ENCODE measurements at regions of chr7 and their contacts with region 1.

Region 1: GRCh38 chr7:47818796-47819606 is 129.3 kb downstream of the PKD1L1 start:
- DNase-seq: peak; percentile 66 to 82
- H3K4me3 ChIP-seq: no peak overlapping the region
- H3K4me3 Mint-ChIP-seq: no peak overlapping the region
- H3K27ac Mint-ChIP-seq: no peak overlapping the region
- H3K4me1 ChIP-seq: peaks cover 15% of the 10 kb centered on the region
- H3K4me1 Mint-ChIP-seq: peaks cover 26% of the 10 kb centered on the region
- H3K27me3 ChIP-seq: no peaks in the 10 kb centered on the region
- H3K27me3 Mint-ChIP-seq: no peaks in the 10 kb centered on the region
- CTCF ChIP-seq: peak; percentile 96 to 98

Region 2: GRCh38 chr7:47435889-47436312 is 383.1 kb before region 1 on chr7:
- CTCF ChIA-PET with region 1: interaction called, 7 read pairs
- POLR2A ChIA-PET with region 1: no interaction called
- intact Hi-C with region 1: loop called (anchors 2 kb)
- DNase-seq: peak in 1 of 2 experiments; percentile 71
- H3K4me3 ChIP-seq: no peak overlapping the region
- H3K4me3 Mint-ChIP-seq: no peak overlapping the region
- H3K27ac Mint-ChIP-seq: peak overlapping the region; percentile 48
- H3K4me1 ChIP-seq: 0 out of 2 replicates have a peak, but pooled peaks cover 4% of the 10 kb centered on the region
- H3K4me1 Mint-ChIP-seq: peaks cover 34% of the 10 kb centered on the region
- H3K27me3 ChIP-seq: no peaks in the 10 kb centered on the region
- H3K27me3 Mint-ChIP-seq: no peaks in the 10 kb centered on the region
- CTCF ChIP-seq: peak; percentile 28 to 69

Region 3: DNA sequence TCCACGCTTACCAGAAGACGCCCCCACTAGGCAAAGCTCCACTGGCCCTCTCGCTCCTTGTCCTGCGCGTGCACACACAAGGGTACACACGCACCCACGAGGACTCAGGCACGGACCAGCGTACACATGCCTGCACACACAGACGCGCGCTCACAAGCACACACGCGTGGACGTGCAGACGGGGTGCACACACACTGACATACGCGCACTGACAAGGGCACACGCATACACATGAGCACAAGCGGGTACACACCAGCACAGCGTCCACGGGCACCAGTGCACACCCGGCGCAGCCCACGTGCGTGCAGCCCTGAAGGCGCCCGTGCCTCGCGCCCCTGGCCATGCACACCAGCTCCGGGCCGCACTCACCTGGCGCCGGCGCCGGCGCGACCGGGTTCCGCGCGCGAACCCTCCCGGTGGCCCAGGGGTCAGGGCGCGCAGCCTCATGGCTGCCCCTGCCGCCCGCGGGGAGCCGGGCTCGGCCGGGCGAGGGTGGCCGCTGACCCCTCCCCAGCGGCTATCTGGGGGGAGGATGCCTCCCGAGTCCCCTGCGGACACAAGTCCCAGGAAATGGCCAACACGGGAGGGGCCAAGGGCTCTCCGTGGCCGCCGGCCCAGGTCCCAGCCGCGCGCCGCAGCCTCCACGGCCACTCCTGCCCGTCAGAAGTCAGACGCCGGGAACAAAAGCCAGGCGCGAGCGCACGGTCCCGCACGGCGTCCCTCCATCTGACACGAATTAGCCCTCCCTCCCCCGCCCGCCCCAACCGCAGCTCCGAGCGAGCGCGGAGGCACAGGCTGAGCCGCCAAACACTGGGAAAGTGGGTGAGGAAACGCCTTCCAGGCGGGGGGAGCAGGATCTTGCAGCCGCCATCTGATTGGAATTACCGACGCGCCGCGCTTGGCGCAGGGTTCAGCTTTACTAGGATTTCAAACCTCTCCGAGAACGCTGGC is 282.1 kb before region 1 on chr7:
- CTCF ChIA-PET with region 1: no interaction called
- POLR2A ChIA-PET with region 1: no interaction called
- intact Hi-C with region 1: loop called (anchors 5 kb)
- DNase-seq: no peak
- H3K4me3 ChIP-seq: no peak overlapping the region
- H3K4me3 Mint-ChIP-seq: peak overlapping the region; percentile 55
- H3K27ac Mint-ChIP-seq: peak overlapping the region; percentile 75
- H3K4me1 ChIP-seq: peaks cover 78% of the 10 kb centered on the region
- H3K4me1 Mint-ChIP-seq: peaks cover 54% of the 10 kb centered on the region
- H3K27me3 ChIP-seq: no peaks in the 10 kb centered on the region
- H3K27me3 Mint-ChIP-seq: no peaks in the 10 kb centered on the region
- CTCF ChIP-seq: no peak

Region 4: DNA sequence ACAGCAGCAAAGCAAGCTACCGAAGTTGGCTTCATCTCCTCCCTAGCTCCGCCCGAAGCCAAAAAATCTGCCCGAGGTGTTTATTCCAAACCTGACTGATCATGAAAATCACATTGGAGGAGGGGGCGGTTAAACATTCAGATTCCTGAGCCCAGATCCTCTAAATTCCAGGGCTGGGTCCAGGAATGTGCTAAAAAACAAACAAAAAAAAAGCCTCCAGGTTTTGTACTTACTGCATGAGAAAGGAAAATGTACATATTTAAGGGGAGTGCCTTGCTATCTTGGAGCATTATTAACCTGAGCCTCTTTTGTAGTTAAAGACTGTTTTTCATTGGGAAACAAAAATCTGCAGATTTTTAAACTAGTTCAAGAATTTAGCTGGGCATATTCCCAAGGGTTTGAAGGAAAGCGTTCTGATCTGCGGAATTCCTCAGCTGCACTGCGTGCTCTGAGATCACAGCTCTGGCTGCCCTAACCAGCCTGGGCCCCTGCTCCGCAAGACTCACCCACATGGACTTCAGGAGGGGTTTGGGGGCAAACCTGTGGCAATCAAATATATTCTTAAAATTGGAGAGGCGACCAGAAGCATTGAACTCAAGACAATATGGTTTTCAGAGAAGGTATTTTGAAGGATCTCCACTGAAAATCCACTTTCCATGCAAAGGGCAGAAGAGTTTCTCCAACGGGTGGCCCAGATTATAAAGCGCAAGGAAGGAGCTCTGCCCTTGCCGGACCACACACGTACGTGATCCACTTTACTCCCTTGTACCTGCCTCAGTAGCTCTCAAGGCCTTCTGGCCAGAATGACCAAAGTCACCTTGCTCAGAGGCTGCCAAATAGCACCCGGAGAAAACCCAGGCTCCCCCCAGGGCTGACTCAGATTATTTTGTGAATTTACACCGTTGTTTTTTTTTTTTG is 227.1 kb before region 1 on chr7:
- CTCF ChIA-PET with region 1: no interaction called
- POLR2A ChIA-PET with region 1: interaction called, 10 read pairs
- intact Hi-C with region 1: no loop called
- DNase-seq: peak; percentile 87 to 92
- H3K4me3 ChIP-seq: 0 out of 2 replicates have a peak overlapping the region, but pooled peaks have one; percentile 9
- H3K4me3 Mint-ChIP-seq: peak overlapping the region; percentile 65
- H3K27ac Mint-ChIP-seq: peak overlapping the region; percentile 86
- H3K4me1 ChIP-seq: peaks cover 64% of the 10 kb centered on the region
- H3K4me1 Mint-ChIP-seq: peaks cover 41% of the 10 kb centered on the region
- H3K27me3 ChIP-seq: no peaks in the 10 kb centered on the region
- H3K27me3 Mint-ChIP-seq: no peaks in the 10 kb centered on the region
- CTCF ChIP-seq: no peak

Region 5: DNA sequence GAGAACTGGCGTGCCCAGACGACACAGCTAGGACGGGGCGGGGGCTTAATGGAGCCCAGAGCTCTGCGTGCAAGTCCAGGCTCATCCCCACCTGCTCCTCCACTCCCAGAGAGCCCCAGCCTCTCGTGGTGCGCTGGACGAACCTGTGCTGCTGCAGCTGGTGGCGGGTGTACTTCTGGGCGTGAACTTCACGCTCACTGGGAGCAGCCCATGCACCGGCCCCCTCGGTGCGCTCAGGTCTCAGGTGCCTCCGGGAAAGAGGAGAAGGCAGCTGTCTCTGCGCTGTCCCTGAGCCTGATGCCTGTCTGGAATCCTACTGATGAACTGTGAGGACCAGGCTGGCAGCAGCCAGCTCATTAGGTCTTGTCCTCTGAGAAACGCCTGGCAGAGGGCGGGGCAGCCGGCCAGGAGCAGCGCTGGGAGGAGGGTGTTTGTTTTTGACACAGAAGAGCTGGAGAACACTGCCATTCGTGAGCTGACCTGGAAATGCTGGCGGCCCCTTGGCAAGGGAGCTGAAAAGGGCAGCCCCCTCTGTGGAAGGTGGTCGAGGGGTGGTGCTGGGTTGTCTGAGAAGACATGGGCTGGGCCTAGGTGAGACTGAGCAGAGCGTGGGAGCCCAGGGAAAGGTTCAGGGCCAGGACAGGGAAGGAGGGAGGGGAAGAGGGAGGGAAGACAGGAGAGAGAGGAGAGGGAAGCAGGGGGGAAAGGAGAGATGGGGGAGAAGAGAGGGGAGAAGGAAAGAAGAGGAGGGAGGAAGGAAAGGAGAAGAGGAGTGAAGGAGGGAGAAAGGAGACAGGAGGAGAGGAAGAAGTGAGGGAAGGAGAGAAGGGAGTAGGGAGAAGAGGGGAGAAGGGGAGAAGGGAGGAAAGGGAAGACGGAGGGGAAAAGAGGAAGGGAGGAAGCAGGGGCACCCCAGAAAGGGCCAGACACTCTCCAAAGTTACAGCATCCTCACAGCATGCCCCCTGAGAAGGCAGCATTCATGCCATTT is 183.6 kb before region 1 on chr7:
- CTCF ChIA-PET with region 1: interaction called, 8 read pairs
- POLR2A ChIA-PET with region 1: no interaction called
- intact Hi-C with region 1: loop called (anchors 5 kb)
- DNase-seq: peak; percentile 64 to 66
- H3K4me3 ChIP-seq: peak overlapping the region; percentile 38
- H3K4me3 Mint-ChIP-seq: peak overlapping the region; percentile 74
- H3K27ac Mint-ChIP-seq: peak overlapping the region; percentile 83
- H3K4me1 ChIP-seq: peaks cover 39% of the 10 kb centered on the region
- H3K4me1 Mint-ChIP-seq: peaks cover 42% of the 10 kb centered on the region
- H3K27me3 ChIP-seq: no peaks in the 10 kb centered on the region
- H3K27me3 Mint-ChIP-seq: no peaks in the 10 kb centered on the region
- CTCF ChIP-seq: no peak

Region 6: DNA sequence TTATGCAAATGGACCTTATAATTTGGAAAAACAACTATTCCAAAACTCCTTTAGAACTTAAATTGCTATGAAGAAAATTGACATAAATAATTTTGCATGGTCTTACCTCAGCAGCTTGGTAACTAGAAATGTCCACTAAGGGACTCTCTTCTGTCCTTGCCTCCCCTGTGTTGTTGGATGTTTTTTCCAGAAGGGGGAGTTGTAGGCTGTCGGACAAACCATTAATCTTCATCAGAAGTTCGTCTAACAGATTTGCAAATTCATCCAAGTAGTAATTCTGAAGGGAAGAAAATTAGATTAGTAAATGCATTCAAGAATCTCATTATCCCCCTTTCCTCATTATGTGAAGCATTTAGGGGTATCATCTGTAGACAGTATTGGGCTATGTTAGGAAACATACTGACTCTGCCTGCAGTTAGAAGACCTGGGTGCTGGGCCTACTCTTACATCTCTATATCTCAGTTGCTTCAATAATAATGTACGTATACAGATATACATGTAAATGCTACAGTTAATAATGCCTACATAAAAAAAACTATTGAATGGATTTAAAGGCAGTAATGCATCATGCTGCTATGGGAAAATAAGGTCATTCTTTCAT is 26.4 kb before region 1 on chr7:
- CTCF ChIA-PET with region 1: interaction called, 3 read pairs
- POLR2A ChIA-PET with region 1: no interaction called
- intact Hi-C with region 1: loop called (anchors 1 kb)
- DNase-seq: peak in 1 of 2 experiments; percentile 42
- H3K4me3 ChIP-seq: no peak overlapping the region
- H3K4me3 Mint-ChIP-seq: no peak overlapping the region
- H3K27ac Mint-ChIP-seq: no peak overlapping the region
- H3K4me1 ChIP-seq: peaks cover 7% of the 10 kb centered on the region
- H3K4me1 Mint-ChIP-seq: peaks cover 7% of the 10 kb centered on the region
- H3K27me3 ChIP-seq: no peaks in the 10 kb centered on the region
- H3K27me3 Mint-ChIP-seq: no peaks in the 10 kb centered on the region
- CTCF ChIP-seq: peak; percentile 43 to 49